Breast epithelium (tissue), 4 donors: ENCODE measurements at regions of chr3 and their contacts with region 1.

Region 1: GRCh38 chr3:40524568-40525285 is at the start of gene ZNF621:
- DNase-seq: peak; percentile 89 to 90
- H3K4me3 ChIP-seq: peak within 1 kb of the TSS; percentile 75 to 91 (median 86)
- H3K27ac ChIP-seq: peak within 1 kb of the TSS; percentile 93
- H3K4me1 ChIP-seq: no peaks in the 10 kb centered on the region
- H3K27me3 ChIP-seq: no peaks in the 10 kb centered on the region
- CTCF ChIP-seq: peak in 1 of 3 donors; percentile 13
- POLR2A ChIP-seq: peak; percentile 87
- total RNA-seq, gene ZNF621: 16.4 to 24.9 (median 17.3) TPM

Region 2: GRCh38 chr3:39291903-39292329 is 1232.8 kb before region 1 on chr3:
- intact Hi-C with region 1: no loop called
- DNase-seq: peak; percentile 36 to 75
- H3K4me3 ChIP-seq: no peak overlapping the region
- H3K27ac ChIP-seq: no peak overlapping the region
- H3K4me1 ChIP-seq: no peaks in the 10 kb centered on the region
- H3K27me3 ChIP-seq: no peaks in the 10 kb centered on the region
- CTCF ChIP-seq: peak; percentile 82 to 86 (median 82)
- POLR2A ChIP-seq: no peak

Region 3: GRCh38 chr3:40452876-40453730 is 71.6 kb before region 1 on chr3:
- intact Hi-C with region 1: loop called (anchors 2 kb)
- DNase-seq: peak; percentile 98 to 99
- H3K4me3 ChIP-seq: peak overlapping the region; percentile 63 to 78 (median 68)
- H3K27ac ChIP-seq: peak overlapping the region; percentile 96
- H3K4me1 ChIP-seq: peaks cover 2 to 7% of the 10 kb centered on the region in 2 donors
- H3K27me3 ChIP-seq: no peaks in the 10 kb centered on the region
- CTCF ChIP-seq: no peak
- POLR2A ChIP-seq: peak; percentile 41

Region 4: DNA sequence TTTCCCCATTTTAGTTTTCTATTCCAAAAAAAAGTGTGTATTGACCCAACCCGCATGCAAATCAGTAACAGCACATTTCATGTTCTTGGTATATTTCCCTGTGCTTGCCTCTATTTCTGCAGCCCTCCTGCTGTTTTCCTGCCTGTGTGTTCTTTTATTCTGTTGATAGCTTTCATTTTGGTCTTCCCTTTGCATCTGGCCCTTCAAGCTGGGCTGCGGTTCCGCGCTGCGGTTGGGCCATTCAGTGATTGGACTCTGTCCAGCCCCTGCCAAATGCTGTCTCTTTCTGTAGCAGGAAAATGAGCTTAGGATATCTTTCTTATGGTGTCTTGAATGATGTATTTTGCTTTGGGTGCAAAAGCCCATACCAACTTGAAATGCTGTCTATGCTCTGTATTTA is 49.9 kb after region 1 on chr3:
- intact Hi-C with region 1: no loop called
- DNase-seq: no peak
- H3K4me3 ChIP-seq: no peak overlapping the region
- H3K27ac ChIP-seq: no peak overlapping the region
- H3K4me1 ChIP-seq: no peaks in the 10 kb centered on the region
- H3K27me3 ChIP-seq: no peaks in the 10 kb centered on the region
- CTCF ChIP-seq: no peak
- POLR2A ChIP-seq: no peak